ENCODE measurements at regions of chr2 and their contacts with region 1.

Region 1: DNA sequence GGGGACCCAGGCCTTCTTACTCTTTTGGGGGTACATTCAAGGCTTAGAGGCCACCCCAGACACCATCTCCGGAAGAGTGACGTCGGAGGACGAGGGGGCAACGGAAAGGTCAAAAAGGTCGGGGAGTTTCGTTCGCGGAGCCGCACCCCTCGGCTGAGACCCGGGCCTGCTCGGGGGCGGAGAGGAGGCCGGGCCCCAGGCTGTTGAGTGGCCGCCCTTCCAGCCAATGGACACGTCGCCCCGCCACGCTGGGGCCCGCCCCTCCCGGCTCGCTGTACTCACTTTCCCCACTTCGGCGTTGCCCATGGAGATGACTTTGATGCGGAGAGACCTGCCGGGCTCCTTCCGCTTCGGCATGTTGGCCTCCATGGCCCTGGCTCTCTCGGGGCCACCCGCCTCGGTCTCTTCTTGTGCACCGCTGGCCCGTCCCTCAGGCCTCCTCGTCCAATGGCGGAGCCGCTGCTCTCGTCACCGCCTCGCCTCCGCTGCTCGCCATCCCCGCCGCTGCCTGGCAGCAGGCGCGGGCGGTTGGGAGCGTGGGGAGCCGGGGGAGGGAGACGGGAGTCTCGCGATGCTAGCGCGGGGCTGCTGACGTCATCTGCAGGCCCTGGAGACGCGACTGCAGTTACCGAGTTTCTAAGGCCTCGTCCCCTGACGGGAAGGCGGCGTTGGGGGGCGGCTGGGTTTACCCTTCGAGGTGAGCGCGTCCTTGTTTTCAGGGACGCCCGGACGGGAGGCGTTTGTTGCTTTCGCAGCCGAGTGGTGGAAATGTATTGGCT is at the start of gene DNAJC27:
- DNase-seq: peak; percentile 97
- H3K4me3 ChIP-seq: peak within 1 kb of the TSS; percentile 55 to 86
- H3K27ac ChIP-seq: peak within 1 kb of the TSS; percentile 96 to 100
- H3K4me1 ChIP-seq: no peaks in the 10 kb centered on the region
- H3K27me3 ChIP-seq: no peaks in the 10 kb centered on the region
- CTCF ChIP-seq: peak in 1 of 4 experiments; percentile 32
- POLR2A ChIP-seq: peak; percentile 97
- total RNA-seq, gene DNAJC27: 3.0 to 9.2 TPM

Region 2: DNA sequence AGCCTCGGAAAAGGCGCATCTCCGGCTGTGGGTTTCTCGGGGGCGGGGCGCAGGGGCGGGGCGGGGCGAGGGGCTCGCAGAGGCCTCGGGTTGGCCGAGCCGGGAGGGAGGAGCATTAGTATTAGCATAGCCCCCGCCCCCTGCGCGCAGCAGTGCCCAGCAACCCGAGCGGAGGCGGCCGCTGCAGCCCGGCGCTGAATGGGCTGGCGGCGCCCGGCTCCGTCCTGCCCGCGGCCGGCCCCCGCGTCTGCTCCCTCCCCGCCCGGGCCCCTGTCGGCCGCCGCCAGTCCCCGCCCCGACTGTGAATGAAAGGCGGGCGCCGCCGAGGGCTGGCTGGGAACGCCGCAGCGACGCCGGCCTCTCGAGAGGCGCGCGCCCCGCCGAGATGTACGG is 70.2 kb after region 1 on chr2 and contains the start of gene EFR3B:
- intact Hi-C with region 1: loop called (anchors 5 kb)
- DNase-seq: peak; percentile 94
- H3K4me3 ChIP-seq: peak within 1 kb of the TSS; percentile 53 to 58
- H3K27ac ChIP-seq: peak within 1 kb of the TSS in 1 of 2 donors; percentile 48
- H3K4me1 ChIP-seq: no peaks in the 10 kb centered on the region
- H3K27me3 ChIP-seq: no peaks in the 10 kb centered on the region
- CTCF ChIP-seq: peak in 2 of 4 experiments; percentile 24 to 25
- POLR2A ChIP-seq: peak; percentile 46
- total RNA-seq, gene EFR3B: 0.14 to 1.6 TPM

Region 3: GRCh38 chr2:25197336-25198208 is 225.8 kb after region 1 on chr2:
- intact Hi-C with region 1: loop called (anchors 10 kb)
- DNase-seq: no peak
- H3K4me3 ChIP-seq: no peak overlapping the region
- H3K27ac ChIP-seq: no peak overlapping the region
- H3K4me1 ChIP-seq: peaks cover 5% of the 10 kb centered on the region
- H3K27me3 ChIP-seq: no peaks in the 10 kb centered on the region
- CTCF ChIP-seq: no peak
- POLR2A ChIP-seq: no peak

Measured in prostate gland (tissue), 2 donors.